ENCODE measurements at regions of chr17 and their contacts with region 1.

Region 1: GRCh38 chr17:35119368-35120165 is at the start of gene RAD51D:
- DNase-seq: peak; percentile 77
- H3K4me3 ChIP-seq: peak within 1 kb of the TSS; percentile 85
- H3K27ac ChIP-seq: peak within 1 kb of the TSS; percentile 77
- H3K4me1 ChIP-seq: peaks cover 23% of the 10 kb centered on the region
- H3K27me3 ChIP-seq: no peaks in the 10 kb centered on the region
- CTCF ChIP-seq: peak; percentile 94
- total RNA-seq, gene RAD51D: 4.6 TPM

Region 2: DNA sequence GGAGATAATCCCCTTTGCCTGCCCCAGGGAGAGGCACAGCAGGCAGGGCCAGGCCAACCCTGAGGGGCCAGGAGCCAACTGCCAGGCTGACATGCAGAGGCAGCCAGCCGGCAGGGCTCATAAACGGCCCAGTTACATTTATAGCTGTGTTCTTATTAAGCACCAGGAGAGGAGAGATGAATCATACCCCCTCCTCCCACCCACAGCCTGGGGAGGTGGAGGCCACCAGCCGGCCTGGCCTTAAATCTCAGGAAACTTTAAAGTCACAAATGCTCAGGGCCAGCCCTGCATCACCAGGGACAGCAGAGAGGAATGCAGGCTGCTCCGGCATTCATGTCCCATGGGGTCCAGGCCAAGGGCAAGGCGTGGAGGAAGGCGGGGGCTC is 362.9 kb before region 1 on chr17:
- intact Hi-C with region 1: no loop called
- DNase-seq: no peak
- H3K4me3 ChIP-seq: no peak overlapping the region
- H3K27ac ChIP-seq: no peak overlapping the region
- H3K4me1 ChIP-seq: peaks cover 6% of the 10 kb centered on the region
- H3K27me3 ChIP-seq: peaks cover 76% of the 10 kb centered on the region
- CTCF ChIP-seq: no peak

Region 3: DNA sequence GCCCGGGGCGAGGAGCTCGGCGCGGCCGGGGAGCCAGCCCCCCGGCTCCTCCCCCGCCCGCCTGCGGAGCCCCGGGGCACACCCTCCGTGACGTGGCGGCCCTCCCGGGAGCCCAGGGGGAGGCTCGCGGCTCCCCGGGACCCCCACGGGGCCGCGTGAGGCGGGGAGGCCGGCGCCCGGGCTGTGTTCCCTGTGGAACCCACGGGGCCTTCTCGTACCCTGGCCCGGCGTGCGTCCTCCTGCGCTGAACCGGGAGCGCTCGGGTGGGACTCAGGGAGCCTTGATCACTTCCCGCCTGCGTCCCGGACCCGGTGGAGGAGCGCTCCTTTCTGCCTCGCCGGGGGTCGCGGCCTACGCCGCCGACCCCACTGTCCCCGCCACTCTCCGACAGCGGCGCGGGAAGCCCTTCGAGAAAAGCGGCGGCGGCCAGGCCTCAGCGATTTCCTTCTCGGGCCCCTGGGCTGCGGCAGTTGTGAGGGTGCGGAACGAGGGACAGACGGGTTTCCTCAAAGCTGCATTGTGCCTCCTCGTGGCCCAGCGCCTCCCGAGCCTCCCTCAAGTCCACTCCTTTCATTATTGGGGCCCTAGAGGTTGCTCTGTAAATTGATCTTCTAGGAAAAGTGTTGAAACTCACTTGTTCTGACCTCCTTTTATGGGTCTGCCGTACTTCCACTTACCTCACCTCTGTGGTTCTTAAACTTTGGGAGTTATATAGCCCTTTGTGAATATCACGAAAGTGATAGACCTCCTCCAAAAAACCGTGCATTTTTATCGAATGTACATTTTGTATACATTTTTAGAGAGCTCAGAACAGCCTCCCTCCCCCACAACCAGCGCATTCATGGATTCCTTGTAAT is 138.7 kb before region 1 on chr17:
- intact Hi-C with region 1: no loop called
- DNase-seq: peak; percentile 76
- H3K4me3 ChIP-seq: peak overlapping the region; percentile 99
- H3K27ac ChIP-seq: peak overlapping the region; percentile 99
- H3K4me1 ChIP-seq: peaks cover 45% of the 10 kb centered on the region
- H3K27me3 ChIP-seq: no peaks in the 10 kb centered on the region
- CTCF ChIP-seq: peak; percentile 55

Region 4: DNA sequence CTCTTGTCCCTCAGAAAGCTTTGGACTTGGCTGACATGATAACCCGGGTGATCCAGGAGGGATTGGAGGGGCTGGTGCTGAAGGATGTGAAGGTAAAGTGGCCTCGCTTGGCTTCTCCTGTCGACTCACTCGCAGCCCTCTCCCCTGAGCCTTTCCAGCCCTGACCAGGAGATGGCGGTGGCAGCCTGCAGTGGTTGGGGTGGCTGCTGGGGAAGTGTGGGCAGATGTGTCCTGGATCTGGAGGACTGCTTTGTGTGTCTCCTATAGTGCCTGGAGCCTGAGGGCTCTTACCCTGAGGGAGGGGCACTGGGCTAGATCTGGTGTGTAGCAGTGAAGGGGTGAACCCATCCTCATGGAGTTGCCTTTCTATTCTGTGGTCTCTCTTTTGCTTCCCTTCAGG is 121.4 kb before region 1 on chr17:
- intact Hi-C with region 1: loop called (anchors 10 kb)
- DNase-seq: peak; percentile 72
- H3K4me3 ChIP-seq: no peak overlapping the region
- H3K27ac ChIP-seq: peak overlapping the region; percentile 63
- H3K4me1 ChIP-seq: peaks cover 40% of the 10 kb centered on the region
- H3K27me3 ChIP-seq: no peaks in the 10 kb centered on the region
- CTCF ChIP-seq: peak; percentile 79